Activated CD4-positive, alpha-beta memory T cell treated with anti-CD3 and anti-CD28 coated beads, Interleukin-2, amount 10 ng/mL, durations not matched to agents 7 days and 5 days (primary cell): ENCODE measurements at regions of chr11 and their contacts with region 1.

Region 1: DNA sequence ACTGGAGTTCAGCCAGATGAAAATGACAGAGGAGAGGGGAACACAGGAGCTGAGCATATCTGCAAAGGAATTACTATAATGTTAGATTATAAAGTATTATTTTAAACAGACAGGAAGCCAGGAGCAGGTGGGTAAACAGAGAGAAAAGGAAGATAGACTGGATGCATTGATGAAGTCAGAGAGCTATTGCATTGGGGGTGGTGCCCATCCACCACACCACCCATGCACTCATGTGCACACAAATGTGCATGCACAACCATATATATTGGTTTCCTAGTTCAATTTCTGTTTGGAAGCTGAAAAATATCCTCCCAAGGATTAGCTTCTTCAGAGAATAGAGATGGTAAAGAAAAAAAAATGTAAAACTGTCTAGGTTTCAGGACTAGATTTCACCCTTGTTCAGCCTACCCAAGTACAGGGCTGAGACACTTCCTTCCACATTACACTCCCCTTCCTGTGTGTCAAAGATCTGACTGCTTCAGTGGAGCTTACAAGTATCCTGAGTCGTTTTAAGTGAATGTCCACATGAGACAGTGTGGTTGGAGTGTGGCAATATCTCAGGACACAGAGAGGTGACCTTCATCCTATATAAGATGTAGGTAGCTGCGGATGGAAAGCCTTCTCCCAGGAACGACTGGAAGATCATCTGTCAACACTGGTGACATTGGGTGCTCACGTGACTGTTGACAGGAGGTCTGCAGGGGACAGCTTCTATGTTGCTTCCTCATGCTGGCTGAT is 12.2 kb upstream of the SMPD1 start:
- DNase-seq: peak; percentile 34
- H3K4me3 Mint-ChIP-seq: peak overlapping the region; percentile 24
- H3K27ac Mint-ChIP-seq: peak overlapping the region; percentile 87
- H3K4me1 Mint-ChIP-seq: peaks cover 35% of the 10 kb centered on the region
- H3K27me3 Mint-ChIP-seq: no peaks in the 10 kb centered on the region

Region 2: DNA sequence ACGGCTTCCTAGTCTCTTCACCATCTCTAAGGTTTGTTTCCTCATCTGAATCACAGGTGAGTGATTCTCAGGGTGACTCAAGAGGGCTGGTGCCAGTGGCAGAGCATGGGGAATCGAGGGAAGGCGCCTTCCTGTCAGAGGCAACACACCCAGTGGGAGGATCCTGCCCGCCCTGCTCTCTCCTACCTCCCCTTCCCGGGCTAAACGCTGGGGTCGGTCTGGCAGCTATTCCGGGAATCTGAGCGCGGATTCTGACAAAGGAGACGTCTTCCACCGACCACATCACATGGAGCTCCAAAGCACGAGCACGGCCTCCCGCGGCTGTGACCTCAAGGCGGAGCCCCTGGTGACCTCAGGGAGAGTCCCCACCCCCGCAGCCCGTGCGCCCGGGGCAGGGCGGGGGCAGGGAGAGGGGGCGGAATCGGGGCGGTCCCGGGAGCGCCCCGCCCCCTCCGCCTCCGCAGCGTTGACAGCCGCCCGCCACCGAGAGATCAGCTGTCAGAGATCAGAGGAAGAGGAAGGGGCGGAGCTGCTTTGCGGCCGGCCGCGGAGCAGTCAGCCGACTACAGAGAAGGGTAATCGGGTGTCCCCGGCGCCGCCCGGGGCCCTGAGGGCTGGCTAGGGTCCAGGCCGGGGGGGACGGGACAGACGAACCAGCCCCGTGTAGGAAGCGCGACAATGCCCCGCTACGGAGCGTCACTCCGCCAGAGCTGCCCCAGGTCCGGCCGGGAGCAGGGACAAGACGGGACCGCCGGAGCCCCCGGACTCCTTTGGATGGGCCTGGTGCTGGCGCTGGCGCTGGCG is 12.1 kb after region 1 on chr11 and contains the start of gene SMPD1:
- CTCF ChIA-PET with region 1: interaction called, 65 read pairs
- POLR2A ChIA-PET with region 1: interaction called, 24 read pairs
- DNase-seq: peak; percentile 96
- H3K4me3 Mint-ChIP-seq: peak within 1 kb of the TSS; percentile 93
- H3K27ac Mint-ChIP-seq: peak within 1 kb of the TSS; percentile 97
- H3K4me1 Mint-ChIP-seq: peaks cover 43% of the 10 kb centered on the region
- H3K27me3 Mint-ChIP-seq: no peaks in the 10 kb centered on the region
- total RNA-seq, gene SMPD1: 55.1 to 58.5 TPM

Region 3: DNA sequence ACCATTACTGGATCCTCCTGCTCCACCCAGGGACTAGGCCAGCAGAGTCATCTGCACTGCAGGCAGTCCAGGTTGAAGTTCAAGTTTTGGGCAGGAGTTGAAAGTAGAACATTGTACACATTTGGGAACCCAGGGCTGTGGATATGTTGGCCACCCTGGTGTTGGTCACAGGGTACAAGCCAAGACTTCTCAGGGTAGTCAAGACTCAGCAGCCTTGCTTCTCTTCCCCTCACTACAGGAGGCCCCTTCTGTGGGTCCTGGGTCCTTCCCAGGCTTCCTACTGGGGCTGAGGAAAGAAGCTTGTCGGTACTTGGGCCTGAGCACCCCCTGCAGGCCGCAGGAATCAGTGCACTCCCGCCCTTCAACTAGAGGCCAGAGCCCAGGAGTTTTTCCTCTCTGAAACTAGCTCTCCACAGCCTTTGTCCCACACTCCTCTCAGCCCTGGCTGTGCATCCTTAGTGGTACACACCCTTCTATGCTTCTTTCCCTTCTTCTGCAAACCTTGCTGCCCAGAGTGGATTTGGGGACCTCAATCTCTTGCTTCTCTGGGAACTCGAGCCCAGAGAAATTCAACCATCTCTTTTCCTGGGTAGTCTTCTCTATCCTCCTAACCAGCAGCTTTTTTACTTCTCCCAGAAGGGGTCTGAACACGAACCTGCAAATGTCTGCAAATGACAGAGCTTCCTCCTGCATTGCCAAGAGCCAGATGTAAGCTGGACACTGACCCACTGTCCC is 65.4 kb after region 1 on chr11:
- CTCF ChIA-PET with region 1: interaction called, 510 read pairs
- POLR2A ChIA-PET with region 1: interaction called, 33 read pairs
- DNase-seq: peak; percentile 62
- H3K4me3 Mint-ChIP-seq: no peak overlapping the region
- H3K27ac Mint-ChIP-seq: no peak overlapping the region
- H3K4me1 Mint-ChIP-seq: no peaks in the 10 kb centered on the region
- H3K27me3 Mint-ChIP-seq: peaks cover 3% of the 10 kb centered on the region

Region 4: GRCh38 chr11:6489306-6489705 is 111.2 kb after region 1 on chr11:
- CTCF ChIA-PET with region 1: interaction called, 30 read pairs
- POLR2A ChIA-PET with region 1: interaction called, 3 read pairs
- DNase-seq: no peak
- H3K4me3 Mint-ChIP-seq: no peak overlapping the region
- H3K27ac Mint-ChIP-seq: no peak overlapping the region
- H3K4me1 Mint-ChIP-seq: no peaks in the 10 kb centered on the region
- H3K27me3 Mint-ChIP-seq: no peaks in the 10 kb centered on the region

Region 5: DNA sequence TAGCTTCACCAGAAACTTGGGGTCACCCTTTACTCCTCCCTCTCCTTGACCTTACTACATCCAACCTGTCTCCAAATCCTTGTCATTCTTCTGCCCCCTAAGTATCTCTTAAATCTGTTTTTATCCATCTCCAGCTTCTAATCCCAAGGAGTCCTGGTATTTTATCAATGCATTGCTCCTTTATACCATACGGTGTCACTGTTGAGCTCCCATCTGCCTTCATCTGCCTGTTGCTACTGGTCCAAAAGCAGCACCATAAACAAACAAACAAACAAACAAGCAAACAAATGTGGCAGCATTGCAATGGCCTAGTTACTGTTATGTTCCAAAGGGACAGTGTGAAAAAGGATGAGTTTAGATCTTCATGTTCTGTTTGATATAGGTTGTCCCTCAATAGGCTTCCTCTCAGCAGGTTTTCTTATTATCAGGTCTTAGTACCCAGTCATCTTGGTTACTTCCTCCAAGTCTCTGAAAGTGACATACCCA is 153.2 kb after region 1 on chr11:
- CTCF ChIA-PET with region 1: interaction called, 22 read pairs
- POLR2A ChIA-PET with region 1: no interaction called
- DNase-seq: peak; percentile 29
- H3K4me3 Mint-ChIP-seq: no peak overlapping the region
- H3K27ac Mint-ChIP-seq: no peak overlapping the region
- H3K4me1 Mint-ChIP-seq: peaks cover 10% of the 10 kb centered on the region
- H3K27me3 Mint-ChIP-seq: no peaks in the 10 kb centered on the region

Region 6: DNA sequence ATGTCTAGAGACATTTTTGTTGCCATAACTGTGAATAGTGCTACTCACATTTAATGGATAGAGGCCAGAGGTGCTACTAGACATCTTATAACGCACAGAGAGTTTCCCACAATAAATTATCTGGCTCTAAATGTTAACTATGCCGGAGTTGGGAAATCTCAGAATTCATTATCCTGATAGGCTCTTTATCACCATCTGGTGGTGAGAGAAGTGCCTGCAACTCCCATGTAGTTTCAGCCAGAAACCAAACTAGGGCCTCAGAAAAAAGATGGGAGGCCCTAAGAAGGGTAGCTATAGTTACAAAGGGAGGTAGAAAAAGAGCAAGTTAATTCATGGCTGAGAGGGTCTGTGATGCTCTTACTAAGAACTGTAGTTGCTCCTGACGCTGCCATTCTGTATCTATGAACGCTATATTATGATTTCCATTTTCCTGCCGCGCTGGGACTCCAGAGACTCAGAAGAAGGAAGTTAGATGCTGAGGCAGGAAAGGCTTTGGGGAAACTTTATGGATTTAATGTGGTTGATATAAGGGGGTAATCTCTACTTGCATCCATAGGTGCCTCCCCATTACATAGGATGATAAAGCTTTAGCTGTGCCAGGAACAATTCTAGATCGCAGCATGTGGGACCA is 327.9 kb after region 1 on chr11:
- CTCF ChIA-PET with region 1: interaction called, 13 read pairs
- POLR2A ChIA-PET with region 1: no interaction called
- DNase-seq: peak; percentile 34
- H3K4me3 Mint-ChIP-seq: no peak overlapping the region
- H3K27ac Mint-ChIP-seq: no peak overlapping the region
- H3K4me1 Mint-ChIP-seq: peaks cover 7% of the 10 kb centered on the region
- H3K27me3 Mint-ChIP-seq: no peaks in the 10 kb centered on the region